Naive thymus-derived CD4-positive, alpha-beta T cell (primary cell): ENCODE measurements at regions of chr5 and their contacts with region 1.

Region 1: GRCh38 chr5:134845852-134846640 is at the start of gene C5orf24:
- DNase-seq: peak; percentile 83 to 93 (median 90)
- ATAC-seq: peak; percentile 98
- H3K4me3 ChIP-seq: peak within 1 kb of the TSS; percentile 60
- H3K4me3 Mint-ChIP-seq: peak within 1 kb of the TSS; percentile 84 to 99 (median 94)
- H3K27ac ChIP-seq: peak within 1 kb of the TSS; percentile 96
- H3K27ac Mint-ChIP-seq: peak within 1 kb of the TSS; percentile 94 to 99 (median 97)
- H3K4me1 ChIP-seq: peaks cover 16 to 19% of the 10 kb centered on the region in 2 donors
- H3K4me1 Mint-ChIP-seq: peaks cover 12 to 42% (median 31%) of the 10 kb centered on the region in 7 donors
- H3K27me3 ChIP-seq: no peaks in the 10 kb centered on the region
- H3K27me3 Mint-ChIP-seq: no peaks in the 10 kb centered on the region
- total RNA-seq, gene C5orf24: 20.3 to 42.7 (median 37.9) TPM

Region 2: GRCh38 chr5:134004592-134005375 is 841.3 kb before region 1 on chr5 and contains the start of gene VDAC1:
- CTCF ChIA-PET with region 1: no interaction called
- POLR2A ChIA-PET with region 1: no interaction called
- intact Hi-C with region 1: loop called in 1 of 2 experiments (anchors 10 kb)
- DNase-seq: peak; percentile 74 to 92 (median 89)
- ATAC-seq: peak; percentile 85
- H3K4me3 ChIP-seq: peak within 1 kb of the TSS; percentile 83
- H3K4me3 Mint-ChIP-seq: peak within 1 kb of the TSS; percentile 89 to 97 (median 92)
- H3K27ac ChIP-seq: peak within 1 kb of the TSS; percentile 98
- H3K27ac Mint-ChIP-seq: peak within 1 kb of the TSS; percentile 86 to 97 (median 96)
- H3K4me1 ChIP-seq: peaks cover 17 to 26% of the 10 kb centered on the region in 2 donors
- H3K4me1 Mint-ChIP-seq: peaks cover 25 to 47% (median 43%) of the 10 kb centered on the region in 7 donors
- H3K27me3 ChIP-seq: no peaks in the 10 kb centered on the region
- H3K27me3 Mint-ChIP-seq: no peaks in the 10 kb centered on the region
- total RNA-seq, gene VDAC1: 37.8 to 259 (median 43.7) TPM

Region 3: DNA sequence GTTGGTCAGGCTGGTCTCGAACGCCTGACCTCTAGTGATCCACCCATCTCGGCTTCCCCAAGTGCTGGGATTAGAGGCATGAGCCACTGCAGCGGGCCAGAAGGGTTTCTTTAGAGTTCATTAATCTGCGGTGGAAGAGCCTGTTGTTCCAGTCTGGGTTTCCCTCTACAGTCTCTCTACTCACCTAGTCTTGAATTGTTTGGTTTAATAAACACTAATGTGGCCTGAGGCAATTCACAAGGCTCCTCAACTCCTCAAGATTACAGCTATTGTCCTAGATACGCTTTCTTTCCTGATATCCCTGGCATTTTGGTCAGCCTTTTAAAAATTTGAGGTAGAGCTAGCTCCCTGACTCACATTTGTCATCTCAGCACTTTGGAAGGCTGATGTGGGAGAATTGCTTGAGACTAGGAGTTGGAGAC is 208.9 kb before region 1 on chr5:
- CTCF ChIA-PET with region 1: no interaction called
- POLR2A ChIA-PET with region 1: interaction called, 5 read pairs
- intact Hi-C with region 1: loop called (anchors 1 kb)
- DNase-seq: no peak
- ATAC-seq: no peak
- H3K4me3 ChIP-seq: no peak overlapping the region
- H3K4me3 Mint-ChIP-seq: no peak overlapping the region
- H3K27ac ChIP-seq: no peak overlapping the region
- H3K27ac Mint-ChIP-seq: no peak overlapping the region
- H3K4me1 ChIP-seq: no peaks in the 10 kb centered on the region
- H3K4me1 Mint-ChIP-seq: peaks cover 0 to 10% (median 4%) of the 10 kb centered on the region in 7 donors
- H3K27me3 ChIP-seq: no peaks in the 10 kb centered on the region
- H3K27me3 Mint-ChIP-seq: no peaks in the 10 kb centered on the region

Region 4: GRCh38 chr5:134758504-134759341 is 87.3 kb before region 1 on chr5 and contains the start of gene DDX46:
- CTCF ChIA-PET with region 1: no interaction called
- POLR2A ChIA-PET with region 1: interaction called, 8 read pairs
- intact Hi-C with region 1: loop called (anchors 1 kb)
- DNase-seq: peak; percentile 85 to 95 (median 91)
- ATAC-seq: peak; percentile 99
- H3K4me3 ChIP-seq: peak within 1 kb of the TSS; percentile 75
- H3K4me3 Mint-ChIP-seq: peak within 1 kb of the TSS; percentile 92 to 100 (median 99)
- H3K27ac ChIP-seq: peak within 1 kb of the TSS; percentile 87
- H3K27ac Mint-ChIP-seq: peak within 1 kb of the TSS; percentile 93 to 99 (median 97)
- H3K4me1 ChIP-seq: peaks cover 12 to 13% of the 10 kb centered on the region in 2 donors
- H3K4me1 Mint-ChIP-seq: peaks cover 20 to 47% (median 38%) of the 10 kb centered on the region in 7 donors
- H3K27me3 ChIP-seq: no peaks in the 10 kb centered on the region
- H3K27me3 Mint-ChIP-seq: no peaks in the 10 kb centered on the region
- total RNA-seq, gene DDX46: 51.2 to 72.5 (median 64.2) TPM

Region 5: DNA sequence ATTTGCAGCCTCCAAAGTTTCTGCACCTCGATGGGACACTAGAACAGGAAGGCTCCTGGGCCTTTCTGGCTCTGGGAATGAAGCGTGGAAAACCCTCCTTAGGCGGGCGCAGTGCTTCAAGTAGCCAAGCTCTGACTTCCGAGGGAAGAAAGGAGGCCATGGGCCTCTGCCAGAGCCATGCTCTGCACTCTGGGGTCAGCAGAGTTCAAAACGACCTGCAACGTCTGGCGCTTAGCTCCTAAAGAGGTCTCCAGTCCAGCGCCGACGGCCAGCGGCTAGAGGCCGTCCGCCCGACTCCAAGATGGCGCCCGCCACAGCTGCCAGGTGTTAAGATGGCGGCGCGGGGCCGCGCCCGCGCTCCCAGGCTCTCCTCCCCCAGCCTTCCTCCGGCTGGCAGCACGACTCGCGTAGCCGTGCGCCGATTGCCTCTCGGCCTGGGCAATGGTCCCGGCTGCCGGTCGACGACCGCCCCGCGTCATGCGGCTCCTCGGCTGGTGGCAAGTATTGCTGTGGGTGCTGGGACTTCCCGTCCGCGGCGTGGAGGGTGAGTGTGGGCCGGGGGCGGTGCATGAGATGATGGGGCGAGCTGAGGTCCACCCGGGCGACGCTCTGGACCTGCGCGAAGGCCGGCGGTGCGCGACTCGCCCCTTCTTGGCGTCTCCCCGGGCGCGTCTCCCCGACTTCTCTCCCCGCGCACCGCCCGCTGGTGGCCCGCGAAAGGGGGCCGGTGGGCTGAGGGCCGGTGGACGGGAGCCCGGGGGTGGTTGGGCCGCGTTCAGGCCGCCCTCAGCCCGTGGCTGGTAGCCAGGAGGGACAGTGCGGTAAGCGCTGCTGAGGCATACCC is 28.2 kb after region 1 on chr5 and contains the start of gene TXNDC15:
- CTCF ChIA-PET with region 1: interaction called, 7 read pairs
- POLR2A ChIA-PET with region 1: interaction called, 22 read pairs
- intact Hi-C with region 1: loop called (anchors 1 kb)
- DNase-seq: peak; percentile 69 to 86 (median 78)
- ATAC-seq: peak; percentile 98
- H3K4me3 ChIP-seq: peak within 1 kb of the TSS; percentile 95
- H3K4me3 Mint-ChIP-seq: peak within 1 kb of the TSS; percentile 89 to 98 (median 94)
- H3K27ac ChIP-seq: peak within 1 kb of the TSS; percentile 88
- H3K27ac Mint-ChIP-seq: peak within 1 kb of the TSS; percentile 91 to 97 (median 95)
- H3K4me1 ChIP-seq: peaks cover 16 to 32% of the 10 kb centered on the region in 2 donors
- H3K4me1 Mint-ChIP-seq: peaks cover 31 to 51% (median 45%) of the 10 kb centered on the region in 7 donors
- H3K27me3 ChIP-seq: no peaks in the 10 kb centered on the region
- H3K27me3 Mint-ChIP-seq: no peaks in the 10 kb centered on the region
- total RNA-seq, gene TXNDC15: 24.2 to 71.3 (median 36.8) TPM